Posterior vena cava (tissue), 2 donors: ENCODE measurements at regions of chr19 and their contacts with region 1.

Region 1: GRCh38 chr19:12733369-12734176 is 911 bp downstream of the TRIR start:
- DNase-seq: no peak

Region 2: GRCh38 chr19:12696366-12697335 is 36.9 kb before region 1 on chr19 and contains the start of gene FBXW9:
- intact Hi-C with region 1: loop called in 1 of 2 experiments (anchors 2 kb)
- DNase-seq: peak; percentile 99
- total RNA-seq, gene FBXW9: 3.1 to 3.6 TPM

Region 3: GRCh38 chr19:12815088-12815487 is 81.5 kb after region 1 on chr19:
- intact Hi-C with region 1: no loop called
- DNase-seq: no peak